Mammary epithelial cell (primary cell): ENCODE measurements at regions of chr15 and their contacts with region 1.

Region 1: GRCh38 chr15:45705510-45706473 is 71.0 kb downstream of the SQOR start:
- DNase-seq: peak; percentile 70
- H3K4me3 ChIP-seq: peak overlapping the region; percentile 48 to 60 (median 53)
- H3K27ac ChIP-seq: peak overlapping the region; percentile 0
- H3K4me1 ChIP-seq: peaks cover 9% of the 10 kb centered on the region
- H3K27me3 ChIP-seq: no peaks in the 10 kb centered on the region
- CTCF ChIP-seq: peak; percentile 67 to 85

Region 2: DNA sequence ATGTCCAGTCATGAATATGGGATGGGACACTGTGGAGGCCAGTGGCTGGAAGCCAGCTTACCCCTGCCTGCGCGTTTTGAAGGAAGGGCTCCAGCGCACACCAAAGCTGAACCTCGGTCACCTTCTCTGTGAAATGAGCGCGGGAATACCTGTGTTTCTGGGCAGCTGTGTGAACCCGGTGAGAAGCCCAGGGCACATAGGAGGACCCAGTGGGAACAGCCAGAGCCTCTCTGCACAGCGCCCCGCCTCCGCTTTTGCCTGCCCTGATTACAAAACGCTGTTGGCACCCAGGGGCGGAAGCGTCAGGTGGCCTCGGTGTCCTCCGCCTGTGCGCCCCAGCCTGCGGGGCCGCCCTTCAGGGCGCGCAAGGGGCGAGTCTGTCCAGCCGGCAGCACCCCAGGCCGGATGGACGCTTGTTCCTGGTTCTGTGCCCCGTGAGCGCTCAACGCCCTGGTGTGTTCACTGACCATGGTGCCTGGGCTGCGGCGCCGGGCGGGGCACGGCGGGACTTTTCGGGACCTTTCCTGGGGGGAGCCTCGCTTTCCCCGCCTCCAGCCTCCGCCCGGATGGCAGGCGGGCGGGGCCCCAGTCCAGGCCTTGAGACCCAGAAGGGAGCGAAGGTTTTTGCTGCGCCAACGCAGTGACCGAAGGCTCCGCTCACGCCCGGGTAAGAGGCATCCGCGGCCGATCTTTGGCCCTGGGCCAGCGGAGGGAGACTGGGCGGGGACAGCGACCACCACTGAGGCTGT is 71.2 kb before region 1 on chr15 and contains the start of gene SQOR:
- CTCF ChIA-PET with region 1: no interaction called
- dilution Hi-C with region 1: no loop called
- in situ Hi-C with region 1: no loop called
- intact Hi-C with region 1: loop called (anchors 1 kb)
- DNase-seq: peak; percentile 92
- H3K4me3 ChIP-seq: peak within 1 kb of the TSS; percentile 65 to 79 (median 71)
- H3K27ac ChIP-seq: peak within 1 kb of the TSS; percentile 78
- H3K4me1 ChIP-seq: peaks cover 52% of the 10 kb centered on the region
- H3K27me3 ChIP-seq: no peaks in the 10 kb centered on the region
- CTCF ChIP-seq: no peak
- total RNA-seq, gene SQOR: 65.7 to 125 TPM

Region 3: GRCh38 chr15:45790325-45790943 is 84.6 kb after region 1 on chr15:
- CTCF ChIA-PET with region 1: interaction called, 5 read pairs
- dilution Hi-C with region 1: no loop called
- in situ Hi-C with region 1: loop called (anchors 5 to 10 kb)
- intact Hi-C with region 1: loop called (anchors 1 kb)
- DNase-seq: peak; percentile 6
- H3K4me3 ChIP-seq: no peak overlapping the region
- H3K27ac ChIP-seq: no peak overlapping the region
- H3K4me1 ChIP-seq: no peaks in the 10 kb centered on the region
- H3K27me3 ChIP-seq: no peaks in the 10 kb centered on the region
- CTCF ChIP-seq: peak; percentile 65 to 75

Region 4: GRCh38 chr15:45855907-45856579 is 150.3 kb after region 1 on chr15:
- CTCF ChIA-PET with region 1: no interaction called
- dilution Hi-C with region 1: no loop called
- in situ Hi-C with region 1: no loop called
- intact Hi-C with region 1: loop called (anchors 5 kb)
- DNase-seq: peak; percentile 91
- H3K4me3 ChIP-seq: no peak overlapping the region
- H3K27ac ChIP-seq: peak overlapping the region; percentile 41
- H3K4me1 ChIP-seq: peaks cover 20% of the 10 kb centered on the region
- H3K27me3 ChIP-seq: no peaks in the 10 kb centered on the region
- CTCF ChIP-seq: no peak

Region 5: DNA sequence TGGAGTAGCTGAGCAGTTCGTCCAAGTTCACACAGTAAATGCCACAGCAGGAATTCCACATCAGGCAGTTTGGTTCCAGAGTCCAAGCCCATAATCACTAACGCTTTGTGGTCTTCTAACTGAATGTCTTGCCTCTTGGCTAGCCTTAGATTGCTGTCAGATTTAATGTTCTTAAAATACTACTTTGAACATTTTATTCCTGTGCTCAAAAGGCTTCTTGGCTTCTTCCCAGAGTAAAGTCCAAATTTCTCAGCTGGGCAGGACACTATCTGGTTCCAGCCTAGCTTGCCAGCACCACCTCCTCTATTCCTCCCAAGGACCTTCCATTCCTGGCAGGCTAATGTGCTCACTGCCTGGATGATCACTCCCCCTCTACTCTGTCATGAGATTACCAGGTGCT is 186.0 kb after region 1 on chr15:
- CTCF ChIA-PET with region 1: no interaction called
- dilution Hi-C with region 1: no loop called
- in situ Hi-C with region 1: no loop called
- intact Hi-C with region 1: no loop called
- DNase-seq: no peak
- H3K4me3 ChIP-seq: no peak overlapping the region
- H3K27ac ChIP-seq: no peak overlapping the region
- H3K4me1 ChIP-seq: no peaks in the 10 kb centered on the region
- H3K27me3 ChIP-seq: no peaks in the 10 kb centered on the region
- CTCF ChIP-seq: no peak

Region 6: GRCh38 chr15:47587940-47588807 is 1882.4 kb after region 1 on chr15:
- CTCF ChIA-PET with region 1: interaction called, 12 read pairs
- dilution Hi-C with region 1: no loop called
- in situ Hi-C with region 1: no loop called
- intact Hi-C with region 1: no loop called
- DNase-seq: no peak
- H3K4me3 ChIP-seq: no peak overlapping the region
- H3K27ac ChIP-seq: no peak overlapping the region
- H3K4me1 ChIP-seq: no peaks in the 10 kb centered on the region
- H3K27me3 ChIP-seq: no peaks in the 10 kb centered on the region
- CTCF ChIP-seq: no peak